Activated T-helper 1 cell treated with anti-CD3 and anti-CD28 coated beads, Interleukin-12 subunit alpha, Interleukin-12 subunit beta, Interleukin-2, Interleukin-4 antibody, amounts not matched to agents 30 ng/mL and 10 ng/mL and 1 ng/mL, durations not matched to agents 14 hours and 24 hours and 36 hours (primary cell): ENCODE measurements at regions of chr12 and their contacts with region 1.

Region 1: DNA sequence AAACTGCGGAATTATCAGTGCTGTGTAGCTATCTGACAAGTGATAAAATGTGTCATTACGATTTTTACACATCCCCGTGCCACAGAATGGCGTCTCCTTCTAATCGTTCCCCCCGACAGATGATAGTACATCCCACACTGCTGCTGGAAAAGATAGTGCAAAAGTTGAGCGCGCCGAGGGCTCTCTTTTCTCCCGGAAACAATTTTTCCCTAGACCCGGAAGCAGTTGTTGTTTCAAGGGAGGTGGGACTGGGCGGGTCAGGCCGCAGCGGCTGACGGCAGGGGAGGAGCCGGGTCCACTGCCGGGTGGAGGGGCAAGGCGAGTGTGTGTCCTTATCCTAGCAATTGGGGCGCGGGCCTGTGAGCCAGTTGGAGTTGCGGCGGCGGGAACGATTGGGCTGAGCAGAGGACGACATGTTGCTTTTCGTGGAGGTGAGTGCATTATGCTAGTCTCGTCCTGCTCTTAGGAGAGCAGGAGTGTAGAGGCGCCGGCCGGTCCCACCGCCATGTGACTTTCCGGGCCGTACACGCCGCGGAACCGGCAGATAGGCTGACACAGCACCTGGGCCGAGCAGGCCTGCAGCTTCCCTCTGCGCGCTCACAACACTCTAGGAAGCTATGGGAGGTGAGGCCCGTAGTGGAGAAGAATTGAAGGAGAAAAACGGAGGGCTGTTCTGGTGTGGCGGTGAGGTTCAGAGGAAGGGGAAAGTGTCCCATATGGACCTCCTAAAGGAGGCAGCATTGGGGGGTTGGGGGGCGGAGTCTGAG is at the start of gene LARP4:
- DNase-seq: peak; percentile 91
- H3K4me3 Mint-ChIP-seq: peak within 1 kb of the TSS; percentile 97
- H3K27ac Mint-ChIP-seq: peak within 1 kb of the TSS; percentile 90
- H3K4me1 Mint-ChIP-seq: peaks cover 22% of the 10 kb centered on the region
- H3K27me3 Mint-ChIP-seq: peaks cover 3% of the 10 kb centered on the region
- total RNA-seq, gene LARP4: 119 and 128 TPM in 2 replicates

Region 2: DNA sequence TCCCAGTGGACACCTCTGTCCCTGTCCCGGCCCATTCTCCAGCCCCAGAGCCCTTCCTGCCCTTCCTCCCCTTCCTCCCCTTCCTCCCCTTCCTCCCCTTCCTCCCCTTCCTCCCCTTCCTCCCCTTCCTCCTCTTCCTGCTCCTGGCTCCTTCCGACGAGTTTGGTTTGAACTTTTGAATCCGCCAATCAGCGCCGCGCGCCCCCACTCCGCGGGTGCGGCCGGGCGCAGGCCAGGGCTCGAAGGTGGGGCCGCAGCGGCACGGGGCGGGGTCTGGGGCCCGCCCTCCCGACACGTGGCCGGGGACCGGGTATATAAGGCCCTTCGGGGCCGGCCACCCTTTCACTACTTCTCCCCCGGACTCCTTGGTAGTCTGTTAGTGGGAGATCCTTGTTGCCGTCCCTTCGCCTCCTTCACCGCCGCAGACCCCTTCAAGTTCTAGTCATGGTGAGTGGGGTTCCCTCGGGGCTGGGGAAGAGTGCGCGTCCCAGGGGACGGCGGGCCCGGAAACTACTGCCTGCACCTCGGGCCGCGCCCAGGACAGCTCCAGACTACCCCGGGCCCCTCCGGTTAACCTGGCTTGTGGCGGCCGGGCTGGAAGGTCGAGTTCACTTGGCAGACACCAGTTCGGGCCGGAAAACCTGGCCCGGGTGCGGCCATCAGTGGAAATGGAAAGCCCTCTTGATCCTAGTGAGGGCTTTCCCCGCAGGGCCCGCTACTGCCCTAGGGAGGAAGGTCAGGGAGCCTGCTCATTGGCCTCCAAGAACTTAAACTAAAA is 1135.9 kb before region 1 on chr12 and contains the start of gene TUBA1C:
- intact Hi-C with region 1: loop called (anchors 10 kb)
- DNase-seq: peak; percentile 92
- H3K4me3 Mint-ChIP-seq: peak within 1 kb of the TSS; percentile 99
- H3K27ac Mint-ChIP-seq: peak within 1 kb of the TSS; percentile 100
- H3K4me1 Mint-ChIP-seq: peaks cover 38% of the 10 kb centered on the region
- H3K27me3 Mint-ChIP-seq: no peaks in the 10 kb centered on the region
- total RNA-seq, gene TUBA1C: 261 and 270 TPM in 2 replicates

Region 3: GRCh38 chr12:50084775-50085614 is 315.8 kb before region 1 on chr12 and contains the start of gene SMARCD1:
- intact Hi-C with region 1: loop called (anchors 2 kb)
- DNase-seq: peak; percentile 78
- H3K4me3 Mint-ChIP-seq: peak within 1 kb of the TSS; percentile 90
- H3K27ac Mint-ChIP-seq: peak within 1 kb of the TSS; percentile 93
- H3K4me1 Mint-ChIP-seq: peaks cover 31% of the 10 kb centered on the region
- H3K27me3 Mint-ChIP-seq: no peaks in the 10 kb centered on the region
- total RNA-seq, gene SMARCD1: 74.6 and 75.3 TPM in 2 replicates

Region 4: GRCh38 chr12:50103767-50104321 is 296.9 kb before region 1 on chr12 and contains the start of gene GPD1:
- intact Hi-C with region 1: no loop called
- DNase-seq: no peak
- H3K4me3 Mint-ChIP-seq: no peak within 1 kb of the TSS
- H3K27ac Mint-ChIP-seq: no peak within 1 kb of the TSS
- H3K4me1 Mint-ChIP-seq: peaks cover 5% of the 10 kb centered on the region
- H3K27me3 Mint-ChIP-seq: peaks cover 2% of the 10 kb centered on the region
- total RNA-seq, gene GPD1: 0.29 and 0.88 TPM in 2 replicates

Region 5: DNA sequence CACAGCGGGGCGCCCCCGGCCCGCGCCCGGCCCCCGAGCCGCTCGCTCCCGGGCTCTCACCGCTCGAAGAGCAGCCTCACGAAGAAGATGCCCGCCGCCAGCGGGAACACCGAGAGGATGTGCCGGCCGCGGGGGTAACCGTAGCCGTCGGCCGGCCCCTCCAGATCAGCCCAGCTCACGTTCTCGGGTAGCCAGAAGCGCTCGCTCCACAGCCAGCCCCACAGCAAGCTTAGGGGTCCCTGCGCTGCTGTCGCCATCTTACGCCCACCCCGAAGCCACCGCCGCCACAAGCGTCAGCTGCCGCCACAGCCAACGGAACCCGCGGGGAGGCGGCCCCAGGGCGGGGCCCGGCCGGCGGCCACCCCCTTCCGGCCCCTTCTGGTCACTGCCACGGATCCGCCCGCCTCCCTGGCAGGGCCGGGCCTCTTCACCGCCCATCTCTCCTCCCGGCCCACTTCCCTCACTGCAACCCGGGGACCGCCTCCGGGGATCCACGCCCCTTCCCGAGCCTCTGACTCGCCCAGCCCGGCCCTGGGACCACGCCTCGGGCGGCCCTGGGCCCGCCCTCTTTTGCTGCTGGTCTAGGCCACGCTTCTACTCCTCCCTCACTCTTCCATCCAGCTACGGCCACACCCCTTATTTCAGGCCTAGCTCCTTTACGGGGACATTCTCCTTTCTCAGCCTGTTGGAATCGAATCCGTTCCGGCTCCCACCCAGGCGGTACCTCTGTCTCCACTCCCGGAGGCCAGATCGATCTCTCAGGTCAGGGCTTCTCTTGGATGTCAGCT is 233.5 kb before region 1 on chr12 and contains the start of gene CERS5:
- intact Hi-C with region 1: loop called (anchors 1 kb)
- DNase-seq: peak; percentile 98
- H3K4me3 Mint-ChIP-seq: peak within 1 kb of the TSS; percentile 99
- H3K27ac Mint-ChIP-seq: peak within 1 kb of the TSS; percentile 95
- H3K4me1 Mint-ChIP-seq: peaks cover 38% of the 10 kb centered on the region
- H3K27me3 Mint-ChIP-seq: no peaks in the 10 kb centered on the region
- total RNA-seq, gene CERS5: 64.2 and 67.9 TPM in 2 replicates

Region 6: GRCh38 chr12:50257686-50258551 is 142.9 kb before region 1 on chr12:
- intact Hi-C with region 1: no loop called
- DNase-seq: no peak
- H3K4me3 Mint-ChIP-seq: no peak overlapping the region
- H3K27ac Mint-ChIP-seq: no peak overlapping the region
- H3K4me1 Mint-ChIP-seq: peaks cover 8% of the 10 kb centered on the region
- H3K27me3 Mint-ChIP-seq: peaks cover 1% of the 10 kb centered on the region

Region 7: DNA sequence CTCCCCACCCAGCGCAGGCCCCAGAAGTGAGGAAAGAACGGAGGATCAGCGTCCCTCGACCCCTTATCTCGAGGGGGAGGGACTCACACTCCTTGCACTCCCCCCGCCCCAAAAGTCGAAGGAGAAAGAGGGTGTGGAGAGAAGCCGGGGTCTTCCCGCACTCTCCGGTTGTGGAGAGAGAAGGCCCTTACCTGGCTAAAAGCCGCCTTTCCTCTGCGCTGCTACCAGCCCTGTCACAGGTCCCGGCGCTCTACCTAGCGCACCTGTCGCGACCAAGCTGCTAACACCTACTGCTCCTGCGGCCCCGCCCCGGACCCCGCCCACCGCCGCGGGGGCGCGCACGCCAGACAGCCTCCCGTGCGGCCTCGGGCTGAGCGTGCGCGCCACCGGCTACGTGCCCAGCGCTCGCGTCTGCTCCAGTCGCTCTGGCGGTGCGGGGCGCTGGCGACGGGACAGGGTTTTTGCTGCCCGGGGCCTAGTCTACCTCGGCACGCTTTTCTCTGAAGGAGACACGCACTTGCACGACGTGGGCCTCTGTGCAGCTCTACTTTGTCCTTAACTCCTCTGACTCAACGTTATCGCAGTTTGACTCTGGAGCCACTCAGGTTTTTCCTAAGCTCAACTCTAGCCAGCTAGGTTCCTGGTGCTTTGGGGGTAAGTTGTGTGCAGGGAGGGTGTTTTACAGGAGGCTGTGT is 117.4 kb before region 1 on chr12 and contains the start of gene LIMA1:
- intact Hi-C with region 1: loop called (anchors 2 kb)
- DNase-seq: peak; percentile 85
- H3K4me3 Mint-ChIP-seq: peak within 1 kb of the TSS; percentile 89
- H3K27ac Mint-ChIP-seq: peak within 1 kb of the TSS; percentile 74
- H3K4me1 Mint-ChIP-seq: peaks cover 17% of the 10 kb centered on the region
- H3K27me3 Mint-ChIP-seq: peaks cover 20% of the 10 kb centered on the region
- total RNA-seq, gene LIMA1: 64.0 and 68.4 TPM in 2 replicates

Region 8: DNA sequence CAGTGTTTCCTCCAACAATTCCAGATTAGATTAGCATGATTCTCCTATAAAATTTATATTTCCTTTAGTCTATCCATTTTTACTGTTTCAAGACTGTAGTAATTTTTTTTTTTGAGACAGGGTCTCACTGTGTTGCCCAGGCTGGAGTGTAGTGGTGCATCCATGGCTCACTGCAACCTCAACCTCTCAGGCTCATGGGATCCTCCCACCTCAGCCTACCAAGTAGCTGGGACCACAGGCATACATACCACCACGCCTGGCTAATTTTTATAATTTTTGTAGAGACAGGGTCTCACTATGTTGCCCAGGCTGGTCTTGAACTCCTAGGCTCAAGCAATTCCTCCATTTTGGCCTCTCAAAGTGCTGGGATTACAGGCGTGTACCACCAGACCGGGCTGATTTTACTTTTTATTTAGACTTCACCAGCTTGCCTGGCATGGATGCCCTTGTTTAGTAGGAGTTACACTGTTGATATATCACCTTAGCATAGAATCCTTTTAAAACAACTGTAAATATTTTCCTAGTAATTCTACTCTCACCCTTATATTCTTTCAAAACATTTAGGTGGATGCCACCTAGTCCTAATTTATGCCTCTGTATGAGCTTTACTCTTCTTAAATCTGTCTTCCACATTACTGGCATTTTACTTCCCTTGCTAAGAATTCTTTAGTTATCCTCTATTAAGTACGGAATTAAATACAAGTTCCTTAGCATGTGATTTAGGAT is 61.7 kb before region 1 on chr12:
- intact Hi-C with region 1: no loop called
- DNase-seq: no peak
- H3K4me3 Mint-ChIP-seq: no peak overlapping the region
- H3K27ac Mint-ChIP-seq: no peak overlapping the region
- H3K4me1 Mint-ChIP-seq: no peaks in the 10 kb centered on the region
- H3K27me3 Mint-ChIP-seq: peaks cover 14% of the 10 kb centered on the region

Region 9: DNA sequence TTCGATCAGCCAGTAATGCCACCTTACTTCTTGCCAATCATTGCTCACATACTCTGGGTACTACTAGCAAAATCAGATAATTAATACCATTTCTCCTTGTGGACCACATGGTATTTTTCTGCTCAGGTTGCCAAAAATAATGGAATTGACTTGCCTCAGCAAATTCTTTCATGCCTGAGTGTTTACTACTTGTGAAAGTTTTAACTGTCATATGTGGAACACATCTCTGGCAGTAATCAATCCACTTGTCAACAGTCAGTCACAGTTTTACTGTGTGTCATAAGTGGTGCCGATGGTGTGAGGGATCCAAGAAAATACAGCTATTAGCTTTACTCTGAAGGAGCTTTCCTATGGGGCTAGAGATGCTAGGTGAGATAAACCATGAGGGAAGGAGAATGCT is 307.9 kb after region 1 on chr12:
- intact Hi-C with region 1: no loop called
- DNase-seq: no peak
- H3K4me3 Mint-ChIP-seq: no peak overlapping the region
- H3K27ac Mint-ChIP-seq: no peak overlapping the region
- H3K4me1 Mint-ChIP-seq: no peaks in the 10 kb centered on the region
- H3K27me3 Mint-ChIP-seq: no peaks in the 10 kb centered on the region

Region 10: GRCh38 chr12:51238510-51239334 is 837.9 kb after region 1 on chr12 and contains the start of gene DAZAP2:
- intact Hi-C with region 1: loop called (anchors 2 kb)
- DNase-seq: peak; percentile 92
- H3K4me3 Mint-ChIP-seq: peak within 1 kb of the TSS; percentile 91
- H3K27ac Mint-ChIP-seq: peak within 1 kb of the TSS; percentile 99
- H3K4me1 Mint-ChIP-seq: peaks cover 45% of the 10 kb centered on the region
- H3K27me3 Mint-ChIP-seq: no peaks in the 10 kb centered on the region
- total RNA-seq, gene DAZAP2: 163 and 169 TPM in 2 replicates